ENCODE measurements at regions of chrX and their contacts with region 1.

Region 1: GRCh38 chrX:125198546-125198945 is 121.1 kb upstream of the TEX13C start:
- DNase-seq: no peak
- ATAC-seq: no peak
- H3K4me3 ChIP-seq: no peak overlapping the region
- H3K27ac ChIP-seq: no peak overlapping the region
- H3K4me1 ChIP-seq: no peaks in the 10 kb centered on the region
- H3K27me3 ChIP-seq: peaks cover 17% of the 10 kb centered on the region
- CTCF ChIP-seq: no peak

Region 2: DNA sequence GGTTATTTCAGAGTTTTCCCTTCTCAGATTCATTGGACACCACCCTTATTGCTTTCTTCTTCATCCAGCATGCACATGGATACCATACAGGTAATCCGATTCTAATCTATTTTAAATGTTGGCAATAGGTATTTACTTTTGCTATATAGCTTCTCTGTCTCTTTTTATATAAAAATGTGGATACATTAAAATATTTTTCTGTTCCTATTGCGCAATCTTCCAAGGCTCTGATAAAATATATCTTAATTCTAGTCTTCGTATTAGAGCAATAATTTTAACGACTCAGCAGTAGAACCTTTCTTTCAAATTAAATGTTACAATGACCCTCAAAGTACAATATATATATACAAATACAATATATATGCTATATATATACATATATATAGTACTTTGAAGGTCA is 727.7 kb after region 1 on chrX:
- CTCF ChIA-PET with region 1: interaction called, 14 read pairs
- POLR2A ChIA-PET with region 1: no interaction called
- in situ Hi-C with region 1: no loop called
- intact Hi-C with region 1: no loop called
- DNase-seq: no peak
- ATAC-seq: no peak
- H3K4me3 ChIP-seq: no peak overlapping the region
- H3K27ac ChIP-seq: no peak overlapping the region
- H3K4me1 ChIP-seq: no peaks in the 10 kb centered on the region
- H3K27me3 ChIP-seq: no peaks in the 10 kb centered on the region
- CTCF ChIP-seq: no peak